ENCODE measurements at regions of chr12 and their contacts with region 1.

Region 1: GRCh38 chr12:91577586-91578539 is 395.2 kb upstream of the DCN start:
- DNase-seq: no peak
- ATAC-seq: peak; percentile 50

Region 2: DNA sequence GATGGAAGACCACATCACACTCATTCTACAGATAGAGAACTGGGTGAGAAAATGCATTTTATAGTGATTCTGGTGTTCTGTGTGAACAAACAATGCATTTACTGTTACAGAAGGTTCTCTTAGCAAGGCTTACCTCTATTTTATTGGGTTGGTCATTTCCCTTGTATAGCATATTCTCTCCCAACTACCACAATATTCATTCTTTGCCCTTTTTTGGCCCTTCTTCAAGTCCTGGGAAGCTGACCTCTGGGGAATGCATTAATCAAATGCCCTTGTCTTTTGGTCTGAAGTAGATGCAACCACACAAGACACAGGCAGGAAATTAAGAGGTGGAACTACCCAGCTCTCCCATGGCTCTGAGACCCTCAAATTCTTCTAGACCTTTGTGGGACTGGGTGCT is 414.7 kb before region 1 on chr12:
- intact Hi-C with region 1: no loop called
- DNase-seq: no peak
- ATAC-seq: no peak

Region 3: DNA sequence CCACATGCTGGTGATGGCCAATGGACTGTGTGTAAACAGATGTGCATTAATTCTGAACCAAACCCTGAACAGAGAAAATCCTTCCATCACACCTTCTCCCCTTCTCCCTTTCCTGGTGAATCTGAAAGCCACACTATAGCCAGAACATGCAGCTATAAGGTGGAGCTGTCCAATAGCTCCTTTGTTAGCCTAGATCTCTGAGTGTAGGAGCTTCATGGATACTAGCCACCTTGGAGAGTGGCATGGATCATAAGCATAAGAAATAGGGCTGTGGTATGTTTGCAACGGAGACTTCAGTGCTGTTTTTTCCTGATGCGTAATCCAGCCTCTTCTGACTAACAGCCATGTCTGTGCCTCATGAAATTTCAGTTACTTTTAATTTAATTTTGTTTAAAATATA is 203.3 kb after region 1 on chr12:
- intact Hi-C with region 1: loop called (anchors 10 kb)
- DNase-seq: no peak
- ATAC-seq: no peak